H1 (cell line): ENCODE measurements at regions of chr6 and their contacts with region 1.

Region 1: DNA sequence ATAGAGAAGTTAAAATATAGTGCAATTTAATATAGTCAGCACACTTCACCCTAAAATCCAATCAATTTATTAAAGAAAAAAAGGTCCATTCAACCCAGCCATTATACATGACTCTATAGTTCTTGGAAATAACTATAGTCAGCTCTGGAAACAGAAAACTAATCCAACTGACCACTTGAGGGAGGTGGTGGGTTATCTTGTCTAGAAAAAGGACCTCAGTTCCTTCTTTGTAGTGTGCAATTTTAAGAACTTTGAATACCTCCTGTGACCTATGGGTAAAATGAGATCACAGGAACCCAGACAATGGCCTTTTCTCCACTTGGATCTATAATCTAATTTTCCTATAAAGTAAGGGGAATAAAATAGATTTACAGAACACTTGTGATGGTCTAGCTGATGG is 163.6 kb upstream of the CENPW start:
- DNase-seq: no peak
- H3K4me3 ChIP-seq: no peak overlapping the region
- H3K27ac ChIP-seq: no peak overlapping the region
- H3K4me1 ChIP-seq: peaks cover 0 to 5% (median 2%) of the 10 kb centered on the region in 4 experiments; a peak in 3 of 7 replicates
- H3K27me3 ChIP-seq: no peaks in the 10 kb centered on the region
- CTCF ChIP-seq: peak in 2 of 3 experiments; percentile 34 to 37; a peak in 2 of 4 replicates
- EP300 ChIP-seq: no peak
- POLR2A ChIP-seq: no peak
- RAD21 ChIP-seq: peak; percentile 71 to 74

Region 2: GRCh38 chr6:126198631-126199030 is 22.3 kb after region 1 on chr6:
- CTCF ChIA-PET with region 1: interaction called, 10 read pairs
- POLR2A ChIA-PET with region 1: no interaction called
- DNase-seq: no peak
- H3K4me3 ChIP-seq: no peak overlapping the region
- H3K27ac ChIP-seq: no peak overlapping the region
- H3K4me1 ChIP-seq: no peaks in the 10 kb centered on the region
- H3K27me3 ChIP-seq: no peaks in the 10 kb centered on the region
- CTCF ChIP-seq: no peak
- EP300 ChIP-seq: no peak
- POLR2A ChIP-seq: no peak
- RAD21 ChIP-seq: no peak

Region 3: GRCh38 chr6:126657561-126658175 is 481.4 kb after region 1 on chr6:
- CTCF ChIA-PET with region 1: interaction called, 10 read pairs
- POLR2A ChIA-PET with region 1: no interaction called
- DNase-seq: no peak
- H3K4me3 ChIP-seq: no peak overlapping the region
- H3K27ac ChIP-seq: no peak overlapping the region
- H3K4me1 ChIP-seq: no peaks in the 10 kb centered on the region
- H3K27me3 ChIP-seq: no peaks in the 10 kb centered on the region
- CTCF ChIP-seq: peak in 2 of 3 experiments; percentile 41 to 60; a peak in 2 of 4 replicates
- EP300 ChIP-seq: no peak
- POLR2A ChIP-seq: no peak
- RAD21 ChIP-seq: peak; percentile 81 to 82